Heart right ventricle (tissue), 16 donors: ENCODE measurements at regions of chr13 and their contacts with region 1.

Region 1: GRCh38 chr13:43935878-43936277 is 56.2 kb downstream of the LACC1 start:
- DNase-seq: no peak
- ATAC-seq: no peak
- H3K4me3 ChIP-seq: no peak overlapping the region
- H3K27ac ChIP-seq: no peak overlapping the region
- H3K4me1 ChIP-seq: peaks cover 3 to 42% (median 22%) of the 10 kb centered on the region in 9 donors
- H3K27me3 ChIP-seq: peaks cover 0 to 83% (median 0%) of the 10 kb centered on the region in 7 donors
- CTCF ChIP-seq: no peak

Region 2: GRCh38 chr13:44017756-44018309 is 82.0 kb after region 1 on chr13:
- intact Hi-C with region 1: loop called in 1 of 10 experiments (anchors 5 kb)
- DNase-seq: peak in 1 of 2 donors; percentile 14
- ATAC-seq: peak; percentile 27 to 82 (median 53)
- H3K4me3 ChIP-seq: no peak overlapping the region
- H3K27ac ChIP-seq: peak overlapping the region in 8 of 10 donors; percentile 1 to 58 (median 46)
- H3K4me1 ChIP-seq: peaks cover 0 to 65% (median 45%) of the 10 kb centered on the region in 9 donors
- H3K27me3 ChIP-seq: no peaks in the 10 kb centered on the region
- CTCF ChIP-seq: no peak